CD4-positive, alpha-beta T cell (primary cell): ENCODE measurements at regions of chr9 and their contacts with region 1.

Region 1: GRCh38 chr9:132079391-132080091 is at the start of gene MED27:
- DNase-seq: peak; percentile 81 to 96 (median 92)
- ATAC-seq: peak; percentile 98
- H3K4me3 ChIP-seq: peak within 1 kb of the TSS; percentile 88
- H3K4me3 Mint-ChIP-seq: peak within 1 kb of the TSS; percentile 91
- H3K27ac ChIP-seq: peak within 1 kb of the TSS in 1 of 2 donors; percentile 11
- H3K27ac Mint-ChIP-seq: peak within 1 kb of the TSS; percentile 68
- H3K4me1 ChIP-seq: peaks cover 19% of the 10 kb centered on the region
- H3K4me1 Mint-ChIP-seq: peaks cover 47% of the 10 kb centered on the region
- H3K27me3 ChIP-seq: peaks cover 0 to 2% of the 10 kb centered on the region in 2 experiments
- H3K27me3 Mint-ChIP-seq: peaks cover 11% of the 10 kb centered on the region
- CTCF ChIP-seq: no peak
- total RNA-seq, gene MED27: 15.0 to 17.4 TPM

Region 2: DNA sequence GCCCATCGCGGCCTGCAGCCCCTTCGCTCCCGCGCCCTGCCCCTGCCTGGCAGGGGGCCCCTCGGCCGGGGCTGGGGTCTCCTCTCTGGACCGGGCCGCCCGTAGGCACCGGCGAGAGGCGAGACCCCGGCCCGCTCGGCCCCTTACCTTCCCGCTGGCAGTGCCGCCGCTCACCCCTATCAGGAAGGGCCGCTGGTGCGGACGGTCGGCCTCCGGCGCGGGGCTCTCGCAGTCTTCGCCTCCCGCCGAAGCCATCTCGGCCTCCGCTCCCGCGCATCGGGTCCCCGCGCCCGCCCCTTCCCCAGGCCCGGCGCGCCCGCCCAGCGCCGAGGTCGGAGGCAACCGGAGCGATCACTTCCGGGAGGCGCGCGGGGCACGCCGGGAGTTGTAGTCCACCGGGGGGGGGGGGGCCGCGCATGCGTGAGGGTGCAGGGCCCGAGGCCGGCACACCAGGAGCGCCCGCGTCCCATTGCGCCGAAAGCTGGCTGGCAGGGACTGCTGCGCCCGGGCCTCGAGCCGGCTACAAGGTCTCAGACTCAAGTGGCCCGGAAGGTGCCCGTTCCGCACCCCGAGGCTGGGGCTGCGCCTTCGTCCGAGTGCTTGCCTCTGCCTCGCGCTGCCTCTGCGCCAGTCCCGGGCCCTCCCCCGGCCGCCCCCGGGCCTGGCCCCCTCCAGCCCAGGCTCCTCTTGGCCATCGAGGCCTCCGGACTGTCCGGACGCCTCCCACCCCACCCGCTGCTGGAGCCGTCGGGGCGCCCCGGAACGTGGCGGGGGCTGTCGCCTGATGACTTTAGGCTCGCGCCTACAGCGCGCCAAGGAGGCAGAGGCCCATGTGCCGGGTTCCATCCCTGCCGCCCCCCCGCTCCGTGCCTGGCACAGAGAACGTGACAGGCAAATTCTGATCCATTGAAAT is 548.4 kb before region 1 on chr9 and contains the start of gene UCK1:
- CTCF ChIA-PET with region 1: no interaction called
- POLR2A ChIA-PET with region 1: no interaction called
- intact Hi-C with region 1: loop called in 1 of 2 experiments (anchors 10 kb)
- DNase-seq: peak; percentile 57 to 93 (median 72)
- ATAC-seq: peak; percentile 91
- H3K4me3 ChIP-seq: peak within 1 kb of the TSS; percentile 72
- H3K4me3 Mint-ChIP-seq: peak within 1 kb of the TSS; percentile 85
- H3K27ac ChIP-seq: peak within 1 kb of the TSS; percentile 13 to 44
- H3K27ac Mint-ChIP-seq: no peak within 1 kb of the TSS
- H3K4me1 ChIP-seq: peaks cover 44% of the 10 kb centered on the region
- H3K4me1 Mint-ChIP-seq: peaks cover 42% of the 10 kb centered on the region
- H3K27me3 ChIP-seq: no peaks in the 10 kb centered on the region
- H3K27me3 Mint-ChIP-seq: no peaks in the 10 kb centered on the region
- CTCF ChIP-seq: no peak
- total RNA-seq, gene UCK1: 22.1 to 22.5 TPM

Region 3: GRCh38 chr9:131997779-131998178 is 81.8 kb before region 1 on chr9:
- CTCF ChIA-PET with region 1: no interaction called
- POLR2A ChIA-PET with region 1: no interaction called
- intact Hi-C with region 1: no loop called
- DNase-seq: no peak
- ATAC-seq: no peak
- H3K4me3 ChIP-seq: no peak overlapping the region
- H3K4me3 Mint-ChIP-seq: no peak overlapping the region
- H3K27ac ChIP-seq: no peak overlapping the region
- H3K27ac Mint-ChIP-seq: no peak overlapping the region
- H3K4me1 ChIP-seq: no peaks in the 10 kb centered on the region
- H3K4me1 Mint-ChIP-seq: peaks cover 8% of the 10 kb centered on the region
- H3K27me3 ChIP-seq: no peaks in the 10 kb centered on the region
- H3K27me3 Mint-ChIP-seq: no peaks in the 10 kb centered on the region
- CTCF ChIP-seq: no peak

Region 4: DNA sequence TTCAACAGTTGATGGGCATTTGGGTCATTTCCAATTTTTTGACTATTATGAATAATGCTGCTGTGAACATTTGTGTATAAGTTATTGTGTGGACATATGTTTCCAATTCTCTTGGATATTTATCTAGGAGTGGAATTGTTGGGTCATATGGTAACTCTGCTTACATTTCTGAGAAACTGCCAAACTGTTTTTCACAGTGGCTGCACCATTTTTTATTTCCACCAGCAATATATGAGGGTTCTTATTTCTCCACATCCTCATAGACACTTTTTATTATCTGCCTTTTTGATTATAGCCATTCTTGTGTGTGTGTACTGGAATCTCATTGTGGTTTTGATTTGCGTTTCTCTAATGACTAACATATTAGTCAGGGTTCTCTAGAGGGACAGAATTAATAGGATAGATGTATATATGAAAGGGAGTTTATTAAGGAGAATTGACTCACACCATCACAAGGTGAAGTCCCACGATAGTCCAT is 14.8 kb after region 1 on chr9:
- CTCF ChIA-PET with region 1: no interaction called
- POLR2A ChIA-PET with region 1: no interaction called
- intact Hi-C with region 1: no loop called
- DNase-seq: no peak
- ATAC-seq: no peak
- H3K4me3 ChIP-seq: no peak overlapping the region
- H3K4me3 Mint-ChIP-seq: no peak overlapping the region
- H3K27ac ChIP-seq: no peak overlapping the region
- H3K27ac Mint-ChIP-seq: no peak overlapping the region
- H3K4me1 ChIP-seq: no peaks in the 10 kb centered on the region
- H3K4me1 Mint-ChIP-seq: no peaks in the 10 kb centered on the region
- H3K27me3 ChIP-seq: peaks cover 10 to 25% of the 10 kb centered on the region in 2 experiments
- H3K27me3 Mint-ChIP-seq: peaks cover 57% of the 10 kb centered on the region
- CTCF ChIP-seq: no peak

Region 5: DNA sequence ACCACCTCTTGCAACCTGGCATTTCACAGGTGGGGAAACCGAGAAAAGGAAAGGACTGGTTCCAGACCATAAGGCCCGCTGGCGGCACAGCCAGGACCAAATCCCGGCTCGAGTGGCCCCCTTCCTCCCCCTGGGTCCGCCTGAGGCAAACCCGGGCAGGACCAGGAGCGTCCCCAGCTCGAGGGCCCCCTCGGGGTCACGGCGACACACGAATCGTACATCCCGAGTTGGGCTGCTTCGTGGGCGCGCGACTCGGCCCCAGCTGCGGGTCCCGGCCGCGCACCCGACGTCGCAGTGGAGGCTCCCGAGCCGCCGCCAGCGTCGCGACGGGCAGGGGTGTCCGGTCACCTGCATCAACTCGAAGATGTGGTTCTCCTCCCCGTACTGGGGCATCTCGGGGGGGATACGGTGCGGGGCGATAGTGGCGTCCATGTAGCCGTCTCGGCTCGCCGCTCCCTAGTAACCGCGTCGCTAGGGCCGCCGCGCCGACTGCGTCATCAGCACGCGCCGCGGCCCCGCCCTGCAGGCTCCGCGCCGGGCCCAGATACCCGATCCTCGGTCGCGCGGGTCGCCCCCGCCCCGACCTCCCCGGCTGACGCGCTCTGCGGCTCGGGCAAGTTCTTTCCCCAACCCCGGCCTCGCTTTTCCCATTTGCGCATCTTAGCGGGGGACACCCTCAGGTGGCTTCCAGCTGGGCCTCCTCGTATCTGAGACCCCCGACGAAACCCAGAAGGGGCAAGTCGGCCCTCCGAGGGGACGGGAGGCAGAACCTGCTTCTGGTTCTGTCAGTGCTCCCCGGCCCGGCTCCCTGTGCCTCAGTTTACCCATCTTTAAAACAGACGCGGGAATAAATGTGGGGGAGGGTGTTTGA is 798.5 kb after region 1 on chr9 and contains the start of gene AK8:
- CTCF ChIA-PET with region 1: interaction called, 3 read pairs
- POLR2A ChIA-PET with region 1: no interaction called
- intact Hi-C with region 1: loop called in 1 of 2 experiments (anchors 1 kb)
- DNase-seq: peak; percentile 54 to 91 (median 69)
- ATAC-seq: peak; percentile 86
- H3K4me3 ChIP-seq: peak within 1 kb of the TSS; percentile 98
- H3K4me3 Mint-ChIP-seq: peak within 1 kb of the TSS; percentile 93
- H3K27ac ChIP-seq: peak within 1 kb of the TSS in 1 of 2 donors; percentile 44
- H3K27ac Mint-ChIP-seq: peak within 1 kb of the TSS; percentile 90
- H3K4me1 ChIP-seq: peaks cover 25% of the 10 kb centered on the region
- H3K4me1 Mint-ChIP-seq: peaks cover 13% of the 10 kb centered on the region
- H3K27me3 ChIP-seq: no peaks in the 10 kb centered on the region
- H3K27me3 Mint-ChIP-seq: no peaks in the 10 kb centered on the region
- CTCF ChIP-seq: no peak
- total RNA-seq, gene AK8: not detected